CD14-positive monocyte (primary cell): ENCODE measurements at regions of chr11 and their contacts with region 1.

Region 1: GRCh38 chr11:123450623-123451022 is 20.6 kb downstream of the GRAMD1B start:
- DNase-seq: no peak
- H3K4me3 ChIP-seq: no peak overlapping the region
- H3K4me3 Mint-ChIP-seq: no peak overlapping the region
- H3K27ac ChIP-seq: no peak overlapping the region
- H3K27ac Mint-ChIP-seq: peak overlapping the region in 1 of 7 donors; percentile 21
- H3K4me1 ChIP-seq: peaks cover 40 to 48% of the 10 kb centered on the region in 2 donors
- H3K4me1 Mint-ChIP-seq: peaks cover 49% of the 10 kb centered on the region
- H3K27me3 ChIP-seq: no peaks in the 10 kb centered on the region
- H3K27me3 Mint-ChIP-seq: no peaks in the 10 kb centered on the region
- CTCF ChIP-seq: no peak

Region 2: DNA sequence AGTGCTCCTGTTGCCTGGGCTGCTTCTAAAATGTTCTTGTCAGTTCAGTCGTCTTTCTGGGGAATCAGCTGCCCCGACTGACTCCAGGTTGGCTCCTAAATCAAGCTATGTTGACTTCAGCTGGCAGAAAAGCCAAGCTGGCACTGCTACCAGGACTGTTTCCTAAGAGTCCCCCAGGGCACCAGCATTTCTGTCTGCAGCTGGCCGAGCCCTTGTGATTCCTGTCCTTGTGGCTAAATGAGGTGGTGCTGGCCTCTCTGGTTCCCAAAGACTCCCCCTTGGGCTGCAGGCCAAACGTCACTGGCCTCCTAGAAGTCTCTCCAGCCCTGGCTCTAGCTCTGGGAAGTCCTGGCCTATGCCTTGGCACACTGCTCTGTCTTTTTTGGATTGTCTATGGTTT is 10.5 kb after region 1 on chr11:
- intact Hi-C with region 1: loop called in 1 of 2 experiments (anchors 2 kb)
- DNase-seq: no peak
- H3K4me3 ChIP-seq: no peak overlapping the region
- H3K4me3 Mint-ChIP-seq: no peak overlapping the region
- H3K27ac ChIP-seq: no peak overlapping the region
- H3K27ac Mint-ChIP-seq: peak overlapping the region in 2 of 7 donors; percentile 0 to 31
- H3K4me1 ChIP-seq: peaks cover 41 to 43% of the 10 kb centered on the region in 2 donors
- H3K4me1 Mint-ChIP-seq: peaks cover 48% of the 10 kb centered on the region
- H3K27me3 ChIP-seq: no peaks in the 10 kb centered on the region
- H3K27me3 Mint-ChIP-seq: peaks cover 0 to 1% (median 0%) of the 10 kb centered on the region in 3 donors
- CTCF ChIP-seq: no peak